Gastrocnemius medialis (tissue), 4 donors: ENCODE measurements at regions of chr17 and their contacts with region 1.

Region 1: GRCh38 chr17:77319211-77320043 is 178.7 kb downstream of the SEC14L1 start:
- DNase-seq: peak; percentile 93 to 95
- ATAC-seq: peak; percentile 72
- H3K4me3 ChIP-seq: peak overlapping the region; percentile 57 to 72 (median 62)
- H3K27ac ChIP-seq: peak overlapping the region; percentile 82 to 91 (median 88)
- H3K4me1 ChIP-seq: peaks cover 61 to 66% of the 10 kb centered on the region in 2 donors
- H3K27me3 ChIP-seq: no peaks in the 10 kb centered on the region
- CTCF ChIP-seq: no peak
- POLR2A ChIP-seq: peak; percentile 79 to 80

Region 2: GRCh38 chr17:77287432-77288071 is 31.9 kb before region 1 on chr17:
- in situ Hi-C with region 1: no loop called
- intact Hi-C with region 1: loop called (anchors 1 kb)
- DNase-seq: peak; percentile 91 to 96
- ATAC-seq: peak; percentile 78 to 88
- H3K4me3 ChIP-seq: peak overlapping the region; percentile 29 to 53 (median 47)
- H3K27ac ChIP-seq: peak overlapping the region; percentile 95 to 96 (median 95)
- H3K4me1 ChIP-seq: peaks cover 45 to 47% of the 10 kb centered on the region in 2 donors
- H3K27me3 ChIP-seq: no peaks in the 10 kb centered on the region
- CTCF ChIP-seq: no peak
- POLR2A ChIP-seq: peak; percentile 78 to 80

Region 3: DNA sequence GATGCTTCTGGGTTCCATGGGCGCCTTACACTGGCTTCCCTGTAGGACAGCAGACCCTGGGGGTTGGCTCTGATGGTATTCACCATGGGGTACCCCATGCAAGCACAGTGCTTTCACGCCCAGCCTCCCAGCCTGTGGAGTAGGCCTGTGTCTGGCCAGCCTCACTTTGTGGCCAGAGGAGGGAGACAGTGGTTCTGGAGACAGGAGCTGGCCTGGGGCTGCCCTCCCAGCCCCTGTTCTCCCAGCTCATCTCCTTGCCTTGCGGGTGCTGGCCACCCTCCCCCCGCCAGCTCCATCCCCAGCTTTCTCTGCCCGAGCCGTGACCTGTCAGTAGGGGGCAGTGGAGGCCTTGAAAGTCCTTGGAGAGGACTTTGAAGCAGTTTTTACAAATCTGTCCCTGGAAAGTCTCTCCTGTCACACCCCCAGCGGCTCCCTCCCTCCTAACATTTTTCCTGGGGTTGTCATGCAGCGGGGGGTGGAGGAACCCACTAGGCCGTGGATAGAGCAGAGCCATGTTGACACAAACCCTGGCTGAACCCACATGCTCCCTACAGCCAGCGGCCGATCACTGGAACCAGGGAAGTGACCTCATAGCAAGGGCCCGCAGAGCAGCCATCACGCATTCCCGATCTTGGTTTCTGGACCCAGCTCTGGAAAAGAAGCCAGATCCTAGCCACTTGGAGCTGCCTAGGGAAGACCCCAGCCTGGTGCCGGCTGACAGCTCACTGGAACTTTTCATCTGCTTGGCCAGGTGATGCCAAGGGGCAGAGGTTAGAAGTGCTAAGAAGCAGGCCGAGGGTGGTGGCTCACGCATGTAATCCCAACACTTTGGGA is 110.7 kb after region 1 on chr17:
- in situ Hi-C with region 1: loop called in 1 of 4 experiments (anchors 10 kb)
- intact Hi-C with region 1: no loop called
- DNase-seq: peak; percentile 70 to 87
- ATAC-seq: peak; percentile 55 to 69
- H3K4me3 ChIP-seq: no peak overlapping the region
- H3K27ac ChIP-seq: peak overlapping the region; percentile 56 to 92 (median 76)
- H3K4me1 ChIP-seq: peaks cover 63 to 80% of the 10 kb centered on the region in 2 donors
- H3K27me3 ChIP-seq: no peaks in the 10 kb centered on the region
- CTCF ChIP-seq: peak; percentile 60 to 83 (median 80)
- POLR2A ChIP-seq: no peak

Region 4: DNA sequence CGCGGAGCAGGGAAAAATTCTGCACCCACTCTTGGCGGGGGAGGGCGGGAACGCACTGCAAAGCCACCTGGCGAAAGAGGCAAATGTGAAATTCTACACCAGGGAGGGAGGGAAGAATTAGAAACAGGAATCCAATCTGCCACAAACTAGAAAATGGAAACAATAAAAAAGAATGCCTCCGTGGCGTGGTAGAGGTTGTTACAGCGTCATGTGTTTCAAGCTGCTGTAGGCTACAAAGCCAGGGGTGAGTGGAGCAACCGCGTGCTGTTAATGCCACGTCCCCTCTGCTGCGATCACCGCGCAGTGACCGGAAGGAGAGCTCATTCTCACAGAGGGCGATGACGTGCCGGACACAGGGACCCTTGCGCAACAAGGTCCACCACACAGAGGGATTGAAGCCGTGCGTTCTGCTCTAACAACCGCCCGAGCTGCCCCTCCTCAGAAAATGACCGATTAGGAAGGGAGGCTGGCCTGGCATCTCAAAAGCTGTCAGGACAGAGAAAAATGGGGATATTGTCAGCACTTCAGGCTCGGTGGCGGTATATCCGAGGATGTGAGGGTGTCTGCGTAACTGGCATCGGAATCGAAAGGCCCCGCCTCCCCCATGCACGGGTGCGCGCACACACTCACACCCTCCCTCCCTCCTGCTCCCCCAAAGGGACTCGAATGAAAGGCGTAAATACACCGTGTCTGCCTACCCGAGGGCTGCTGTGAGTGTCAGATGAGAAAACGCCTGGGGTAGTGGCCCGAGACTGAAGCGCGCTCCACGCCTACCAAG is 568.2 kb after region 1 on chr17:
- in situ Hi-C with region 1: no loop called
- intact Hi-C with region 1: loop called (anchors 5 kb)
- DNase-seq: peak; percentile 67 to 84
- ATAC-seq: peak; percentile 87 to 91
- H3K4me3 ChIP-seq: peak overlapping the region; percentile 61 to 65 (median 62)
- H3K27ac ChIP-seq: peak overlapping the region; percentile 56 to 67 (median 65)
- H3K4me1 ChIP-seq: peaks cover 5 to 11% of the 10 kb centered on the region in 2 donors
- H3K27me3 ChIP-seq: no peaks in the 10 kb centered on the region
- CTCF ChIP-seq: no peak
- POLR2A ChIP-seq: peak; percentile 26 to 40